WTC11 (cell line): ENCODE measurements at regions of chr13 and their contacts with region 1.

Region 1: DNA sequence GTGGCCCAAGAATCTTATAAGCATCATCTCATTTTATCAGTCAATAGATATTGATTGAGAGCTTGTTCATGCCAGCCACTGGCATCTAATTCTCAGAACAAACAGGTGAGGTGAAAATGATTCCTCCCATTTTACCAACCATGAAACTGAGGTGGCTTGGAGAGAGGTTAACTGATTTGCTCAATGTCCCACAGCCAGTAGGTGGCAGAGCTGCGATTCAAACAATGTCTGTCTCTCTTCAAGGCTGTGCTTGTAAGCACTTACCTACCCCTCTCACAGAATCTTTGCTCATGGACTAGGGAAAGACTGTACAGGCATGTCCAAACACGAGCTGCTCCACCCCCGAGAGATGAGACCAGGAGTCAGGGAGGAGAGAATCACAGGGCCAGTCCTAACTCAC is 21.5 kb upstream of the GSX1 start:
- DNase-seq: peak; percentile 56
- ATAC-seq: peak; percentile 89
- H3K4me3 Mint-ChIP-seq: no peak overlapping the region
- H3K27ac Mint-ChIP-seq: no peak overlapping the region
- H3K4me1 Mint-ChIP-seq: peaks cover 9% of the 10 kb centered on the region
- H3K27me3 Mint-ChIP-seq: peaks cover 45% of the 10 kb centered on the region
- CTCF ChIP-seq: no peak

Region 2: DNA sequence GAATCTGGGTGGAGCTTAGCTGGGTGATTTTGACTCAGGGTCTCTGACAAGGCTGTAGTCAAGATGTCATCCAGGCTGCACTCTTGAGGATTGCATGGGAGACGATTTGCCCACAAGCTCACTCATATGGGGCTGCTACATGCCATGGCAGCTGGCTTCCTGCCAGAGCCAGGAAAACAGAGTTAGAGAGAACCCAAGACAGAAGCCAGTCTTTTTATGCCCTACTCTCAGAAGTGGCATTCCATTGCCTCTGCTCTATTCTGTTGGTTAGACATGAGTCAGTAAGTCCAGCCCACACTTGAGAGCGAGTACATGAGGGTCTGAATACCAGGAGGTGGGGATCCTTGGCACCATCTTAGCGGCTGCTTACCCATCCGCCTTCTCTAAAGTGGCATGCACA is 139.7 kb before region 1 on chr13:
- CTCF ChIA-PET with region 1: no interaction called
- POLR2A ChIA-PET with region 1: no interaction called
- DNase-seq: no peak
- ATAC-seq: no peak
- H3K4me3 Mint-ChIP-seq: no peak overlapping the region
- H3K27ac Mint-ChIP-seq: peak overlapping the region; percentile 28; the same call in 1 of the 2 replicates
- H3K4me1 Mint-ChIP-seq: peaks cover 5% of the 10 kb centered on the region
- H3K27me3 Mint-ChIP-seq: no peaks in the 10 kb centered on the region
- CTCF ChIP-seq: no peak

Region 3: GRCh38 chr13:27650312-27650711 is 120.5 kb before region 1 on chr13:
- CTCF ChIA-PET with region 1: no interaction called
- POLR2A ChIA-PET with region 1: no interaction called
- DNase-seq: no peak
- ATAC-seq: no peak
- H3K4me3 Mint-ChIP-seq: no peak overlapping the region
- H3K27ac Mint-ChIP-seq: no peak overlapping the region
- H3K4me1 Mint-ChIP-seq: peaks cover 5% of the 10 kb centered on the region
- H3K27me3 Mint-ChIP-seq: no peaks in the 10 kb centered on the region
- CTCF ChIP-seq: no peak

Region 4: GRCh38 chr13:27721681-27722080 is 49.1 kb before region 1 on chr13:
- CTCF ChIA-PET with region 1: no interaction called
- POLR2A ChIA-PET with region 1: no interaction called
- DNase-seq: no peak
- ATAC-seq: no peak
- H3K4me3 Mint-ChIP-seq: no peak overlapping the region
- H3K27ac Mint-ChIP-seq: no peak overlapping the region
- H3K4me1 Mint-ChIP-seq: no peaks in the 10 kb centered on the region
- H3K27me3 Mint-ChIP-seq: peaks cover 3% of the 10 kb centered on the region; the same call in 1 of the 2 replicates
- CTCF ChIP-seq: no peak

Region 5: DNA sequence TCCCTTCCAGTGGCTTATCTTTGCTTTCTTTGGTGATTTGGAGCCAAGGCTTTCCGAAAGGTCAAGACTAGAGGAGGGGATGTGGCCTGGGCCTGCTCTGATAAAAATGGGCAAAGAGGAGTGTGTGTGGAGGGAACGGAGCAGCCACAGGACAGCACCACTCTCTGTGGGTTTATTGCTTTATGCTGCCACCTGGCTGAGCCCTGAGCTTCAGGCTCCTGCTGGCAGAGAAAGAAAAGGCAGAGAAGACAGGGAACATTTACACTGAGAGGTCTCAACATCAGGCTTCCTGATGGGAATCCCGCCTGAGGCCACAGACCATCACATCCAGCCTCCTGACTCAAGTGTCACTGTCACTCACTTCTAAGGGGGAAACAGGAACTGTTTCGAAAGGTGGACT is 12.3 kb after region 1 on chr13:
- CTCF ChIA-PET with region 1: interaction called, 20 read pairs
- POLR2A ChIA-PET with region 1: no interaction called
- DNase-seq: peak; percentile 38
- ATAC-seq: peak; percentile 96
- H3K4me3 Mint-ChIP-seq: no peak overlapping the region
- H3K27ac Mint-ChIP-seq: no peak overlapping the region
- H3K4me1 Mint-ChIP-seq: peaks cover 16% of the 10 kb centered on the region
- H3K27me3 Mint-ChIP-seq: peaks cover 82% of the 10 kb centered on the region
- CTCF ChIP-seq: no peak